Activated CD4-positive, alpha-beta T cell treated with anti-CD3 and anti-CD28 coated beads for 36 hours (primary cell): ENCODE measurements at regions of chr7 and their contacts with region 1.

Region 1: GRCh38 chr7:49001610-49002033 is 77.3 kb downstream of the CDC14C start:
- DNase-seq: peak; percentile 45
- ATAC-seq: peak; percentile 61
- H3K4me3 Mint-ChIP-seq: no peak overlapping the region
- H3K27ac Mint-ChIP-seq: no peak overlapping the region
- H3K4me1 Mint-ChIP-seq: no peaks in the 10 kb centered on the region
- H3K27me3 Mint-ChIP-seq: no peaks in the 10 kb centered on the region

Region 2: DNA sequence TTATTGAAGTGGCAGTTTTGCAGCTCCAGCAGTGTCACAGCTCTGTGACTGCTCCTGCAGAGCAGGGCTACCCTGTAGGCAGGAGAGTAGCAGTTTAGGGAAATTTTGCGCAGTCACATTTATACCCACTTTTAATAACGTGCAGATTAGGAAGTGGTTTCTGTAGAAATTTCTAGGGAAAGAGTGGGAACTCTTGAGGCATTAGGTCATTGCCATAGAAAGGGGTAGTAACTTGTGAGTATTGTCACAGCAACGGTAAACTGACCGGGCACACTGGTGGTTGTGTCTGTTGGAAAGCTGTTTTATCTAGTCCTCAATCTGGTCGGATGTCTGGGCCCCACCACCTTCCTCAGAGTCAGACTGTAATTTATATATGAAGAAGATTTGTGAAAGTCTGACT is 25.4 kb before region 1 on chr7:
- CTCF ChIA-PET with region 1: no interaction called
- POLR2A ChIA-PET with region 1: no interaction called
- intact Hi-C with region 1: no loop called
- DNase-seq: no peak
- ATAC-seq: no peak
- H3K4me3 Mint-ChIP-seq: no peak overlapping the region
- H3K27ac Mint-ChIP-seq: no peak overlapping the region
- H3K4me1 Mint-ChIP-seq: no peaks in the 10 kb centered on the region
- H3K27me3 Mint-ChIP-seq: no peaks in the 10 kb centered on the region

Region 3: GRCh38 chr7:49037348-49038210 is 36.0 kb after region 1 on chr7:
- CTCF ChIA-PET with region 1: no interaction called
- POLR2A ChIA-PET with region 1: no interaction called
- intact Hi-C with region 1: no loop called
- DNase-seq: no peak
- ATAC-seq: no peak
- H3K4me3 Mint-ChIP-seq: no peak overlapping the region
- H3K27ac Mint-ChIP-seq: no peak overlapping the region
- H3K4me1 Mint-ChIP-seq: no peaks in the 10 kb centered on the region
- H3K27me3 Mint-ChIP-seq: no peaks in the 10 kb centered on the region

Region 4: GRCh38 chr7:49166441-49166840 is 164.8 kb after region 1 on chr7:
- CTCF ChIA-PET with region 1: no interaction called
- POLR2A ChIA-PET with region 1: no interaction called
- intact Hi-C with region 1: loop called in 1 of 2 experiments (anchors 5 kb)
- DNase-seq: no peak
- ATAC-seq: no peak
- H3K4me3 Mint-ChIP-seq: no peak overlapping the region
- H3K27ac Mint-ChIP-seq: no peak overlapping the region
- H3K4me1 Mint-ChIP-seq: no peaks in the 10 kb centered on the region
- H3K27me3 Mint-ChIP-seq: peaks cover 1% of the 10 kb centered on the region

Region 5: DNA sequence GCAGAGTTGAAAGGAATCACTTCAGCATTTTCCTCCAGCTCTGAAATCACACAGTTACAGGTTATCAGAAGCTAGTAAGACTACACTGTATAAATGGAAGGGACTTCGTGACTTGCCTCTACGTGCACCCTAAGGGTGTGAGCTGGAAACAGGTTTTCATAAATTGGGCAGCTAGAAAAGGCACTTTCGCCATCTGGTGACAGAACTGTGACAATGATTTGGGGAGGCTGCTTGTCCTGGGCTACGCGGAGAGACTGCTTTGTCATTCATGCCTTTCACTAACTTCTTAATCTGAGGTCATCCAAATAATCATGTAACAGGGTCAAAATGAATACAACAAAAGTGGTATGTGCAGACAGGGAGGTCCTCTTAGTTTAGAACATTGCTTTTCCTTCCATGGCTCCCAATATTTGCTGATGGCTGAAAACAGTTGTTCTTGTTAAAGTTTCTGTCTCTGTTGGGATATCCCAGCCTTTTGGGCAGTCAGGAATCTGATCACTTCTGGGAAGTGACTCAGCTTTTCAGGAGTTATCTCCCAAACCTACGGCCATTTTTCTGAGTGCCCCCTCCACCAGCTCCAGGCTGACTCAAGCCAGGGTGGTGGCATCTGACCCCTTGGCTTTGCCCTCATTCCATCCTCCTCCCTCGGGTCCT is 789.6 kb after region 1 on chr7:
- CTCF ChIA-PET with region 1: no interaction called
- POLR2A ChIA-PET with region 1: no interaction called
- intact Hi-C with region 1: loop called in 1 of 2 experiments (anchors 1 kb)
- DNase-seq: peak; percentile 32
- ATAC-seq: peak; percentile 47
- H3K4me3 Mint-ChIP-seq: no peak overlapping the region
- H3K27ac Mint-ChIP-seq: no peak overlapping the region
- H3K4me1 Mint-ChIP-seq: no peaks in the 10 kb centered on the region
- H3K27me3 Mint-ChIP-seq: peaks cover 9% of the 10 kb centered on the region

Region 6: DNA sequence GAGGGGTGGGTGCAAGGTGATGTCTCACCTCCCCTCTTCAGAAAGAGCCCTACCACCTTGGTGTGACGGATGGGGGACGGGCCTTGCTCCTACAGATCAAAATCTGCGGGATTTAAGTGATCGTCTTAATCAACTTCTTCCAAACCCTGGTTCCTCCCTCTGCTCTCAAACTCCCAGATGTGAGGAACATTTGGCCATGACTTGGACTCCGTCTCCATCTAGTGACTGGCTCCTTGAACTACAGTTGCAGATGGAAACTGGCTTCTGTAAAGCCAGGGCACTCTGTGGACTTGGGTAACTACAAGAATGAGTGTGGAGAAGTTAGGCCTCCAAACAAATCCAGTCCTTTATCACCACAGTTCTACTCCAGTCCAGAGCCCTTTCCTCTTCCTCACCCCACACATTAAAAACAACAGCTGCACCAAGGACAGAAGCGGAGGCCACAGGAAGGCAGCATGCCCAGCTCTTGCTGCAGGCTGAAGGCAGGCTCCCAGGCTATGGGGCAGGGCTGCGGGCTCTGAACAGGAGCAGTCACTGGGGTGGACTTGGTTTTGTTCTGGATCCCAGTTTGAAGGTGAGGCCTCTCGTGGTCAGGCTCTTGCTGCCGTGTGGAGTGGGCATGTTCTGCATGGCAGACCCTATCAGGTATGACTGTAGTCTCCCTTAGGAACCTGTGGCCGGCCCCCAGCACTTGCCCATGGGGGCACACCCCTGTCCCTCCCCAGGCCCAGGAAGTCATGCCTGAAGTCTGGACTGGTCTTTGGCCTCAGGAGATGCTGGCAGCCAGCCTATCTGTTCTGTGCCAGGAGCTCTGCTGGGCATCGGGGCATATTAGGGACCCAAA is 851.2 kb after region 1 on chr7:
- CTCF ChIA-PET with region 1: no interaction called
- POLR2A ChIA-PET with region 1: no interaction called
- intact Hi-C with region 1: loop called in 1 of 2 experiments (anchors 1 kb)
- DNase-seq: peak; percentile 39
- ATAC-seq: peak; percentile 74
- H3K4me3 Mint-ChIP-seq: no peak overlapping the region
- H3K27ac Mint-ChIP-seq: no peak overlapping the region
- H3K4me1 Mint-ChIP-seq: no peaks in the 10 kb centered on the region
- H3K27me3 Mint-ChIP-seq: no peaks in the 10 kb centered on the region